ENCODE measurements at regions of chr21 and their contacts with region 1.

Region 1: DNA sequence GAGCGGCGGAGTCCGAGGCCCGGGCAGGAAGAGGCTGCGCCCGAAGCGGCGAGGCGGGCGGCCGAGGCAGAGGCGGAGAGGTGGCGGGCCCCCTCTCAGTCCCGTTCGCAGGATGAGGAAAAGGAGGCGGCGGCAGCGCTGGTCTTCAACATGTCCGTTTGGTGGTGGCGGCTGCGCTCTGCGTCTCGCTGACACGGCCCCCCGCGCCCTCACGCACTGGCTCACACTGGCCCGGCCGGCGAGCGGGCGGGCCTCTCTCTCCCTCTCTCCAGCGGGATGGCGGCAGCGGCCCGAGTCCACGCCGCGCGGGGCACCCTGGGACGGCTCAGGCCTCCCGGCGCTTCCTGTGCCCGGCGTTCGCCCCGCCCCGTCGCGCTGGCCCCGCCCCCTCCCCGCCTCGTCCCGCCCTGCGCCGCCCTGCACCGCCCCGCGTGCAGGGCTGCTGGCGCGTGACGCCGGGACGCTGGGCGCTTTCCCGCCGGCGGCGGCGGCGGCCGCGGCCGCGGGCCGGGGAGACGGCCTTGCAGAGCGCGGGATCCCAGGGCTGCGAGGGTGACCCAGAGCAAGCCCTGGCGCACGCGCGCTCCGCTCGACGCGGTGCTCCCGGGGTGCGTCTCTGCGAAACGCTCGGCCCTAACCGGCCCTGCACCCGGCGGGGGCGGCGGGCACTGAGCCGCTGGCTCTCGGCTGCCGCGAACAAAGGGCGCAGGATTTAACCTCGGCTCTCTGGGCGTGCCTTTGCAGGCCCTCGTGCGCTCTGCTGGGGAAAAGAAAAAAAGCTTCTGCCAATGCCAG is at the start of gene SCAF4:
- DNase-seq: peak; percentile 54 to 93 (median 74)
- ATAC-seq: peak; percentile 82
- H3K4me3 ChIP-seq: peak within 1 kb of the TSS; percentile 82
- H3K4me3 Mint-ChIP-seq: peak within 1 kb of the TSS; percentile 97
- H3K27ac ChIP-seq: peak within 1 kb of the TSS; percentile 67 to 82
- H3K27ac Mint-ChIP-seq: no peak within 1 kb of the TSS
- H3K4me1 ChIP-seq: peaks cover 44% of the 10 kb centered on the region
- H3K4me1 Mint-ChIP-seq: no peaks in the 10 kb centered on the region
- H3K27me3 ChIP-seq: no peaks in the 10 kb centered on the region
- H3K27me3 Mint-ChIP-seq: no peaks in the 10 kb centered on the region
- CTCF ChIP-seq: no peak
- total RNA-seq, gene SCAF4: 56.1 to 57.8 TPM

Region 2: DNA sequence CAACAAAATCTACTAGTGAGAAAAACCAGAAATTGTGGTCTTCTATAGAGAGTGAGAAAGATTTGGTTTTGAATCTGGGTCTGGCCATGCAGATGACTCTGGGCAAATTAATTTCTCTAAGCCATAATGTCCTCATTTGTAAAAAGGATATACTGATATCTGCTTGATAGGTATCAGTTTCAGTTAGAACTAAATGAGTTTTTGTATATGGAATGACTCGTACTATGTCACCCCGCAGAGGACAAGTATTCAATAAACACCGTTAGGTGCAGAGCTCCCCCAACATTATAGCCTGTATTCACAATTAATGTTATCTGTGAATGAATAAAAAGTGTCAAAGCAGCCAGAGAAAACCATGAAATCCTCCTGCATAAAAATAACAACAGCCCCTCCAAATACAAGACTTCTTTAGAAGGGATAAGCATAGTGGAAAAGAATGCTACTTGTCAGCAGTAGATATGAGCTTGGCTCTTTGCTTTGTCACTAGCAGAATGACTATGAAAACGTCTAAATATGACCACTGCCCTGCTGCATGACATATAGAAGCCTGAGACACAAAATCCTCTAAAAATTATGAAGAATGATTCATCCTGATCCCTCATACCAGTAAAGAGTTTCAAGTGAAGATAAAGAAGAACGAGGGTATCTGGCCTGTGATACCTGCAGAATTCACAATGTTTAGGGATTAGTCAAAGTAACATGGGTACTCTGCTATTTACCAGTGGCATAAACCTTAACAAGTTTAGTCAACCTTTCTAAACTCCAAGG is 17.8 kb before region 1 on chr21:
- CTCF ChIA-PET with region 1: no interaction called
- POLR2A ChIA-PET with region 1: interaction called, 3 read pairs
- intact Hi-C with region 1: loop called in 1 of 2 experiments (anchors 2 kb)
- DNase-seq: no peak
- ATAC-seq: no peak
- H3K4me3 ChIP-seq: no peak overlapping the region
- H3K4me3 Mint-ChIP-seq: peak overlapping the region; percentile 25
- H3K27ac ChIP-seq: no peak overlapping the region
- H3K27ac Mint-ChIP-seq: peak overlapping the region; percentile 28
- H3K4me1 ChIP-seq: peaks cover 9% of the 10 kb centered on the region
- H3K4me1 Mint-ChIP-seq: peaks cover 92% of the 10 kb centered on the region
- H3K27me3 ChIP-seq: no peaks in the 10 kb centered on the region
- H3K27me3 Mint-ChIP-seq: no peaks in the 10 kb centered on the region
- CTCF ChIP-seq: no peak

Region 3: DNA sequence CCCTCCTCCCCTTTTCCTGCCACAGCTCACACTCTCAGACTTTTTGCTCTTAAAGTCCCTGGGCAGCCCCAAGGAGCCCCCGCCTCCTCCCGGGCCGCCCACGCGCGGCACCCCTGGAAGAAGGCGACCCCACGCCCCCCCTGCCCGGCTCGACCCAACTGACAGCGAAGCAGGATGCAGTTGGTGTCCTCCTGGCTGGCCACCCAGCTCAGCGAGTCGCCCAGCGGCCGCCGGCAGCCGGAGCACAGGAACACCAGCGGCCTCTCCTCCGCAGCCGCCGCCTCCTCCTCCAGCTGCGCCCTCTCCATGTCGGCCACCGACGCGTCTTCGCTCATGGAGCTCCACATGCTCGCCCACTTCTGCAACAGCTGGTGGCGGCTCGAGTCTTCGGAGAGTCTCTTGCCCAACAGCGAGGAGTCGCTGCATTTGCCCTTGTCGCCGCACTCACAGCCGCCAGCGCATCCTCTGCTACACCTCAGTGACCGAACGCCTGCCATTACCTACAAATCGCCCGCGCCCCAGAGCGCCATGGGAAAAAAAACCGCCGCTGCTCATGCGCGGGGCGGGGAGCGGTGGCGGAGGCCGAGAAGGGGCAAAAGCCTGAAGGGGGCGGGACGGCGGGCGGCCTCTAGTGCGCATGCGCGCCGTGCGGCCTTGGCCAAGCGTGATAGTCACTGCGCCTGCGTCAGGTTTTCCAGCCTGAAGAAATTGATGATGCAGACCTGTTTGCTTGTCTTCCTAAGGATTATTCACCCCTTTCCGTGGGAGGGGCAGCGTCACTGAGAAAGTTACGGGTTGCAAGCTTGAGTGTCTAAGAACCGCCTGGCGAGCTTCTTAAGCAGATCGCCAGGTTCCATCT is 546.7 kb after region 1 on chr21 and contains the start of gene MIS18A:
- CTCF ChIA-PET with region 1: no interaction called
- POLR2A ChIA-PET with region 1: no interaction called
- intact Hi-C with region 1: loop called in 1 of 2 experiments (anchors 5 kb)
- DNase-seq: peak; percentile 92 to 99 (median 97)
- ATAC-seq: peak; percentile 94
- H3K4me3 ChIP-seq: peak within 1 kb of the TSS; percentile 94
- H3K4me3 Mint-ChIP-seq: peak within 1 kb of the TSS; percentile 99
- H3K27ac ChIP-seq: peak within 1 kb of the TSS in 1 of 2 donors; percentile 26
- H3K27ac Mint-ChIP-seq: peak within 1 kb of the TSS; percentile 94
- H3K4me1 ChIP-seq: peaks cover 20% of the 10 kb centered on the region
- H3K4me1 Mint-ChIP-seq: peaks cover 29% of the 10 kb centered on the region
- H3K27me3 ChIP-seq: no peaks in the 10 kb centered on the region
- H3K27me3 Mint-ChIP-seq: no peaks in the 10 kb centered on the region
- CTCF ChIP-seq: no peak
- total RNA-seq, gene MIS18A: 2.7 to 3.0 TPM

Region 4: DNA sequence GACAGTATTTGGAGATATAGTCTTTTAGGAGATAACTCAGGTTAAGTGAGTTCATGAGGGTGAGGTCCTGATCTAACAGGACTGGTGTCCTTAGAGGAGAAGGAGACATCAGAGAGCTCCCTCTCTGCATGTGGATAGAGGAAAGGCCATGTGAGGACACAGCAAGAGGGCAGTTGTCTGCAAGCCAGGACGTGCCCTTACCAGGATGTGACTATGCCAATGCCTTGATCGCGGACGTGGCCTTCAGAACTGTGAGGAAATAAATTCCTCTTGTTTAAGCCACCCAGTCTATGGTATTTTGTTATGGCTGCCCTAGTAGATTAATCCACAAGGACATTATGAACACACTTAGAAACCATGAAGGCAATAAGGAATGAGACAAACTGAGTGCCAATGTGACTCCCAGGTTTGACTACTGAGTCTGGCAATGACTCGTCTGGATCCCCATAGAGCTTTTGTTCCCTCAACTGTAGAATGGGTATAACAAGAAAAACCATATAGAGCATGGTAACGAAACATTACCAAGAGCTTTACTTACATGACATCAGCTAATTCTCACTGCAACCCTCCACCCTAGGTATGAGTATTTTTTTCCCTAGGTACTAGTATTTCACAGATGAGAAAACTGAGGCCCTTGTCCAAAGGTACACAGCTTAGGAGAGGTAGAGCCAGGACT is 654.3 kb after region 1 on chr21:
- CTCF ChIA-PET with region 1: no interaction called
- POLR2A ChIA-PET with region 1: no interaction called
- intact Hi-C with region 1: loop called in 1 of 2 experiments (anchors 5 kb)
- DNase-seq: no peak
- ATAC-seq: no peak
- H3K4me3 ChIP-seq: no peak overlapping the region
- H3K4me3 Mint-ChIP-seq: no peak overlapping the region
- H3K27ac ChIP-seq: no peak overlapping the region
- H3K27ac Mint-ChIP-seq: no peak overlapping the region
- H3K4me1 ChIP-seq: peaks cover 9% of the 10 kb centered on the region
- H3K4me1 Mint-ChIP-seq: peaks cover 45% of the 10 kb centered on the region
- H3K27me3 ChIP-seq: no peaks in the 10 kb centered on the region
- H3K27me3 Mint-ChIP-seq: no peaks in the 10 kb centered on the region
- CTCF ChIP-seq: no peak